ENCODE measurements at regions of chr11 and their contacts with region 1.

Region 1: DNA sequence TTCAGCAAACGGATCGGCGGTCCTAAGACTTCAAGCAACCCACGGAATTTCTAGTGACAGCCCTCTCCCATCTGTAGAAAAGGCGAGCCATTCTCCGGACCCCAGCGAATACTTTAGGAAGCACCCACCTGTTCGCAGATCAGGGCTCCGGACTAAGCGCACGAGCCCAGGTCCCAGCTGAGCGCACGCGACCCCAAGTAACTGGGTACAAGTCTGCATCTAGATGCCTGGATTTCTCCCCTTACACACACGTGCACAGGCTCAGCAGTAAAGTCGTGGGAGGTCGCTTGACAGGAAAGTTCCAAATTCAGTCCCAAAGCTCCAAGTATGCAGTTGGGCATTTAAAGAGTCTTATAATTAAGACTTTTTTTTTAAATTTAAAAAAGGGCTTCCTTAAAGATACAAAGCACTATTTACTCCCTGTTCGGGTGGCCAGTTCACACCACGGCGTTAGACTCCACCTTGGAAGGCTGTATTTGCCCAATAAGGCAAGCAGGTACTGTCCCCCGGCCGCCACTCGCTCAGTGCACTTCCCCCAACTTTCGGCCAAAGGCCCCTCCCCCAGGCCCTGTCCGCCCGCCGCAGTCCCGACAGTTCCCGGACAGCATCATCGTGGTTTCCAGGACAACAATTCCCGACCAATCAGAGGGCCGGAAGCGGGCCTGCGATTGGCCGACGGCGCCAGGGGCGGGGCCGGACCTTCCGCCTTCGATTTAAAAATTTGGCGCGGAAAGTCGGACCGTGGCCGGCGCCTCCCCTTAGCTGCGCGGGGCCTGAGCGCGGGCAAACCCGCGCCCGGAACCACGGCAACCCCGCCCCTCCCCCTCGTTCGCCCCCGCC is at the start of gene E2F8:
- DNase-seq: peak; percentile 96
- H3K4me3 Mint-ChIP-seq: peak within 1 kb of the TSS; percentile 93
- H3K27ac Mint-ChIP-seq: peak within 1 kb of the TSS; percentile 66
- H3K4me1 Mint-ChIP-seq: peaks cover 15% of the 10 kb centered on the region
- H3K27me3 Mint-ChIP-seq: peaks cover 47% of the 10 kb centered on the region
- total RNA-seq, gene E2F8: 19.5 to 21.2 TPM

Region 2: GRCh38 chr11:18105802-18106574 is 1134.7 kb before region 1 on chr11 and contains the start of gene SAAL1:
- CTCF ChIA-PET with region 1: no interaction called
- intact Hi-C with region 1: loop called (anchors 10 kb)
- DNase-seq: peak; percentile 93
- H3K4me3 Mint-ChIP-seq: peak within 1 kb of the TSS; percentile 90
- H3K27ac Mint-ChIP-seq: peak within 1 kb of the TSS; percentile 83
- H3K4me1 Mint-ChIP-seq: peaks cover 34% of the 10 kb centered on the region
- H3K27me3 Mint-ChIP-seq: no peaks in the 10 kb centered on the region
- total RNA-seq, gene SAAL1: 36.4 to 37.0 TPM

Region 3: DNA sequence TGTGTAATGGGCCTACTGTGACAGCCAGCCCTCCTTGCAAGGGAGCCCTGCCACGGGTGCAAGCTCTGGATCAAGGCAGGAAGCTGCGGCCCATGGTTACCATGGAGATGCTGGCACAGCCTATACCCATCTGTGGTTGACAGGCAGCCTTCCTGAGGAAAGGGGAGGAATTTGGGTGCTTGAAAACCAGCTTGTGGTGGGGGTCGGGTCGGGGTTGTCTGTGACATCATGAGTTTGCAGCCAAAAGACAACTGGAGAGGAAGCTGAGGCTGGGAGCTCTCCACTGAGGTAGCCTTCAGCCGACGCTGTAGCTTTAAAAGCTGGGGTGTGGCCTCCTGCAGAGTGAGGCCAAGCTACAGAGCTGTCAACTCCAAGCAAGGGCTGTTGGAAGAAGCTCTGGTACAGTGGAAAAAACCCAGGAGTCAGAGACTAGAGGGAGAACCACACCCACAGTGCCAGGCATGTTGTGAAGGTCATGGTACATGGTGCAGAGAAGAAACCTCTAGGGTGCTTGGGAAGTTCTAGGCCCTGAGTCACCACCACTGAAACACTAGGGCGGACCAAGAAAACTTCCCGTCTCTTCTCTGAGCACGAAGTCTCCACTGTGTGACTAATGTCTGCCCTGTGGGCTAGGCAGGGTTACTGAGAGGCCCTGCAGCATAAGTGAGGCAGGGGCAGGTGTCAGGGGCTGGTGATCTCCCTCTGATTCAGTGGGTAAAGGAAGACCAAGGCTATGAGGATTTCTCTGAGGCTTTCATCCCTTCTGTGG is 857.1 kb before region 1 on chr11:
- CTCF ChIA-PET with region 1: no interaction called
- intact Hi-C with region 1: loop called (anchors 2 kb)
- DNase-seq: peak; percentile 92
- H3K4me3 Mint-ChIP-seq: peak overlapping the region; percentile 42
- H3K27ac Mint-ChIP-seq: peak overlapping the region; percentile 89
- H3K4me1 Mint-ChIP-seq: peaks cover 34% of the 10 kb centered on the region
- H3K27me3 Mint-ChIP-seq: no peaks in the 10 kb centered on the region

Region 4: DNA sequence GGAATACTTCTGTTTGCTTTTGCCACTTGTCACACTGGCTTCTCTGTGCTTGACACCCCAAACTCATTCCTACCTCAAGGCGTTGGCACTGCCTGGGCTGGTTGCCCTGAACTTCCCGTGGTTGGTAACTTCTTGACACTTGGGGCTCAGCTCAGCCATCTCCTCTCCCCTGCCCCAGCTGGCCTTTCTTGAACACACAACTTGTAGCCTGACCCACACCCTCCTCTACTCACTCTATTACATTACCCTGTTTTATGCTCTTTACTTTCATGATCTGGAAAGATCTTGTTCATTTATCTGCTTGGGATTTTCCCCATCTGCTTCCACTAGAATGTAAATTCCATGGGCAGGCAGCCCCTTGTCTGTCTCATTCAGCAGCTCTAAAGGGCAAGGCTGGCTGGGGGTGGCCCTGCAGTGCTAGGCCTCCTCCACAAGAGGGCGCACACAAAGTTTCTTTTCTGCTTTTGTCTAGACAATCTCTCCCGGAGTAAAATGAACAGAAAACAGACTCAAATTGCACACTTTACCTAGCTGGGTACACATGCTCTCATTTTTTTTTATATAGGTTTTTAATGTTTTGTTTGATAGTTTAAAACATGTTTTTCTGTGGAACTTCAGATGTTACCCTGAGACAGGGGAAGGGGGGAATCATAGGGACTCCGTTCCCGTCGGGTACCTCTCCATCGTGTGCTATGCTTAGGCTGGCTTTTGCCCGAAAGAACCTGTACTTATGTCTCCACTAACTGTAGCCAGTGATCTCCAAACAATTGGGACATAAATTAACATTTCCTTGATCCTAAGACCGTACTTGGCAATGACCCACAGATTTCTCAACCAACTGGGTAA is 163.7 kb before region 1 on chr11:
- CTCF ChIA-PET with region 1: no interaction called
- intact Hi-C with region 1: loop called (anchors 1 kb)
- DNase-seq: peak; percentile 81
- H3K4me3 Mint-ChIP-seq: no peak overlapping the region
- H3K27ac Mint-ChIP-seq: no peak overlapping the region
- H3K4me1 Mint-ChIP-seq: peaks cover 1% of the 10 kb centered on the region
- H3K27me3 Mint-ChIP-seq: peaks cover 12% of the 10 kb centered on the region

Region 5: DNA sequence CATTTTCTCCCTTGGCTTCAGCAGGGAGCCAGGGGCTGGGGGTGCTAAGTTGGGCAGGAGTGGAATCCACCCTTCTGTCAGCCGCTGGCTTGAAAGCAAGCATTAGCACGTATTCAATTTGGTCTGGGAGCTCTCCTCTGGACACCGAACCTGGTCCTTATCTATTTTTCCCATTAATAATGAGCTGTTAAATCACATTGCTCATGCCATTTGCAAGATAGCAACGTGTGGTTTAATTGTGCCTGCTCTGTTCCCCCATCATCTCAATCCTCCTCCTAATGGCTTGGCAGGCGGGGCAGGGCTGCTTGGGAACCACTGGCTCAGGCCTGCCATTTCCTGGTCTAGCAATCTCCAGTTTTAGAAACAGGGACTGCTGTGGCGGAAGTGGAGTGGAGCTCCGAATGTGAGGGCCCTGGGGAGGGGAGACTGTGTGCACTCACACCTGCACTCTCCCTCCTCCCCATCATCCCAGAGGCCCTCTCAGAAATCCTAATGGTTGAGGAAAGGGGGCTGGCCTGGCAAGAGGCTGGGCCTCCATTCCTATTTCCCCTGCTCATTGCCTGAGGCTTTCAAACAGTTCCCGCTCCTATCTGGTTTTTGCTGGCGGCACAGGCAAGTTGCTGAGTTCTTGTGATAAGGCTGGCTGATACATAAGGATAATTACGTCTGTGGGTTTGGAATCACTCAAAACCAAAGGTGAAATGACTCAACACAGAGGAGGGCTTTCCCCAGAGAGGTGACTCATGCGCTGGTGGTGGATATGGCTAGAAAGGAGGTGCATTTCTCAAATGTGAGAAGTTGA is 201.3 kb after region 1 on chr11:
- CTCF ChIA-PET with region 1: no interaction called
- intact Hi-C with region 1: loop called (anchors 2 kb)
- DNase-seq: peak; percentile 84
- H3K4me3 Mint-ChIP-seq: no peak overlapping the region
- H3K27ac Mint-ChIP-seq: no peak overlapping the region
- H3K4me1 Mint-ChIP-seq: peaks cover 11% of the 10 kb centered on the region
- H3K27me3 Mint-ChIP-seq: peaks cover 18% of the 10 kb centered on the region

Region 6: GRCh38 chr11:20158597-20159257 is 918.1 kb after region 1 on chr11:
- CTCF ChIA-PET with region 1: no interaction called
- intact Hi-C with region 1: loop called (anchors 2 kb)
- DNase-seq: peak; percentile 45
- H3K4me3 Mint-ChIP-seq: no peak overlapping the region
- H3K27ac Mint-ChIP-seq: no peak overlapping the region
- H3K4me1 Mint-ChIP-seq: peaks cover 47% of the 10 kb centered on the region
- H3K27me3 Mint-ChIP-seq: peaks cover 69% of the 10 kb centered on the region

Measured in activated naive CD4-positive, alpha-beta T cell treated with anti-CD3 and anti-CD28 coated beads for 36 hours (primary cell).